ENCODE measurements at regions of chr1 and their contacts with region 1.

Region 1: GRCh38 chr1:205631727-205632373 is at the start of gene ELK4:
- DNase-seq: peak; percentile 99 to 100 (median 100)
- ATAC-seq: peak; percentile 82 to 86 (median 84)
- H3K4me3 ChIP-seq: peak within 1 kb of the TSS; percentile 79 to 91
- H3K4me3 Mint-ChIP-seq: peak within 1 kb of the TSS; percentile 85 to 95 (median 91)
- H3K27ac ChIP-seq: peak within 1 kb of the TSS; percentile 94
- H3K27ac Mint-ChIP-seq: peak within 1 kb of the TSS; percentile 95 to 98
- H3K4me1 ChIP-seq: peaks cover 22 to 29% of the 10 kb centered on the region in 2 experiments
- H3K4me1 Mint-ChIP-seq: peaks cover 41 to 48% (median 41%) of the 10 kb centered on the region in 3 donors
- H3K27me3 ChIP-seq: no peaks in the 10 kb centered on the region
- H3K27me3 Mint-ChIP-seq: no peaks in the 10 kb centered on the region
- total RNA-seq, gene ELK4: 131 to 185 (median 173) TPM

Region 2: GRCh38 chr1:205581321-205581980 is 50.4 kb before region 1 on chr1:
- CTCF ChIA-PET with region 1: interaction called in 1 of 2 experiments, 10 read pairs
- POLR2A ChIA-PET with region 1: no interaction called
- DNase-seq: no peak
- ATAC-seq: no peak
- H3K4me3 ChIP-seq: no peak overlapping the region
- H3K4me3 Mint-ChIP-seq: no peak overlapping the region
- H3K27ac ChIP-seq: no peak overlapping the region
- H3K27ac Mint-ChIP-seq: no peak overlapping the region
- H3K4me1 ChIP-seq: peaks cover 0 to 15% of the 10 kb centered on the region in 2 experiments
- H3K4me1 Mint-ChIP-seq: peaks cover 6 to 15% (median 8%) of the 10 kb centered on the region in 3 donors
- H3K27me3 ChIP-seq: peaks cover 0 to 51% of the 10 kb centered on the region in 2 experiments
- H3K27me3 Mint-ChIP-seq: peaks cover 5 to 26% of the 10 kb centered on the region in 2 donors